Pancreas (tissue), 10 donors: ENCODE measurements at regions of chr9 and their contacts with region 1.

Region 1: GRCh38 chr9:32968101-32969011 is 33.1 kb downstream of the APTX start:
- DNase-seq: peak in 4 of 6 donors; percentile 18 to 82 (median 46)
- ATAC-seq: peak in 3 of 4 donors; percentile 59 to 72 (median 70)
- H3K4me3 ChIP-seq: no peak overlapping the region
- H3K27ac ChIP-seq: no peak overlapping the region
- H3K4me1 ChIP-seq: no peaks in the 10 kb centered on the region
- H3K27me3 ChIP-seq: no peaks in the 10 kb centered on the region
- CTCF ChIP-seq: peak; percentile 64 to 88 (median 73)

Region 2: DNA sequence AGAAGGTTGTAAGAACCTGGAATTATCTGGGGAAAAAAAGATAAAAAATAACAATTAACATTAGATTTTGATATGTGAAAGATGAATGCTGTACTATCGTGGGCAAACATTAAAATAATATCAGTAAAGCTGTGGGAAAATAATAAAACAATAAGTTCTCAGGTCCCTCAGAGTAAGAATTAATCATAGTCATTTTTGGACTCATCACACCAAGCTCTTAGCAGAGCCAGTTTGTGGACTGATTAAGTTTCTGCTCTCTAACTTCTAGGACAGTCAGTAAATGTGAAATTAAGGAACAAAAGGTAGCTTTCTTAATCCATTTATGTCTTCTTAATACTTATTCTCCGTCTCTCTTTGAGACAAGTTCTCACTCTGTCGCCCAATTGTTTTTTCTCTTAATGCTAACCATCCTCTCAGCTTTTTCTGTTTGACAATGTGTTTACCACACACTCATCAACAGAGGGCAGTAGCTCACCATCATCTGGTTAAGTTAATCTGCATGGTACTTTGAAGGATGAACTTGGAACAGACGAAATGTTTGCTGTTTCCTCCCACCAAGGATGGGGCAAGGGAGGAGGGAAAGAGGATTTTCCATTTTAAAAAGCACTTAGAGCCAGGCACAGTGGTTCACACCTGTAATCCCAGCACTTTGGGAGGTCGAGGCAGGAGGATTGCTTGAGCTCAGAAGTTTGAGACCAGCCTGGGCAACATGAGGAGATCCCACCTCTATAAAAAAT is 589.2 kb before region 1 on chr9:
- intact Hi-C with region 1: loop called in 1 of 3 experiments (anchors 10 kb)
- DNase-seq: peak in 3 of 6 donors; percentile 38 to 59 (median 53)
- ATAC-seq: peak; percentile 89 to 96 (median 94)
- H3K4me3 ChIP-seq: no peak overlapping the region
- H3K27ac ChIP-seq: no peak overlapping the region
- H3K4me1 ChIP-seq: no peaks in the 10 kb centered on the region
- H3K27me3 ChIP-seq: no peaks in the 10 kb centered on the region
- CTCF ChIP-seq: peak; percentile 24 to 61 (median 50)